Naive thymus-derived CD4-positive, alpha-beta T cell (primary cell): ENCODE measurements at regions of chr10 and their contacts with region 1.

Region 1: GRCh38 chr10:45672181-45673073 is at the start of gene ZFAND4:
- DNase-seq: peak; percentile 88 to 93 (median 91)
- ATAC-seq: peak; percentile 98
- H3K4me3 ChIP-seq: peak within 1 kb of the TSS; percentile 70
- H3K4me3 Mint-ChIP-seq: peak within 1 kb of the TSS; percentile 81 to 99 (median 94)
- H3K27ac ChIP-seq: peak within 1 kb of the TSS; percentile 79
- H3K27ac Mint-ChIP-seq: peak within 1 kb of the TSS; percentile 77 to 97 (median 93)
- H3K4me1 ChIP-seq: peaks cover 7 to 13% of the 10 kb centered on the region in 2 donors
- H3K4me1 Mint-ChIP-seq: peaks cover 23 to 54% (median 46%) of the 10 kb centered on the region in 7 donors
- H3K27me3 ChIP-seq: no peaks in the 10 kb centered on the region
- H3K27me3 Mint-ChIP-seq: peaks cover 0 to under 1% (median 0%) of the 10 kb centered on the region in 5 donors
- total RNA-seq, gene ZFAND4: 21.4 to 33.2 (median 29.5) TPM

Region 2: DNA sequence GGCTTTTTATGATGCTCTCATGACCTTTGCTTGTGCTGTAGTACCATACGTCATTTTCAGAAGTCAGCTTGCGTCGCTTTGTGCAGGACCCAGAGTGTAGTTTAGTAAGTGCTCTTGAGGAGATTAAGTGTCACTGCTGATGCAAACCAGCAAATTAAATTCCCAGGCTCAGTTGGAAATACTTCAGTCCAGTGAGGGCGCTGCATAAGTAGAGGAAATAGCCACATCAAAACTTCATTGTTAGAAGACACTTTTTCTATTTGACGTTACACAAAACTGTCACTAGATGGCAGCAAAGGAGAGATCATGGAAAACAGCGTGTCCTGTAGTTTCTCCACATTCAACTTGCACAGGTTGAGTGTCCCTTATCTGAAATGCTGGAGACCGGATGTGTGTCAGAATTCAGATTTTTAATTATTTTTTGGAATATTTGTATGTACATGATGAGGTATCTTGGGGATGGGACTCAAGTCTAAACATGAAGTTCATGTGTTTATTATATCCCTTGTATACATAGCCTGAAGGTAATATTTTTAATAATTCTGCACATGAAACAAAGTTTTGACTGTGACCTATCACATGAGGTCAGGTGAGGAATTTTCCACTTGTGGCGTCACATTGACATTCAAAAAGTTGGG is 663.8 kb before region 1 on chr10:
- CTCF ChIA-PET with region 1: no interaction called
- POLR2A ChIA-PET with region 1: no interaction called
- intact Hi-C with region 1: loop called in 1 of 2 experiments (anchors 10 kb)
- DNase-seq: peak in 7 of 9 donors; percentile 33 to 68 (median 56)
- ATAC-seq: peak; percentile 91
- H3K4me3 ChIP-seq: no peak overlapping the region
- H3K4me3 Mint-ChIP-seq: no peak overlapping the region
- H3K27ac ChIP-seq: no peak overlapping the region
- H3K27ac Mint-ChIP-seq: no peak overlapping the region
- H3K4me1 ChIP-seq: no peaks in the 10 kb centered on the region
- H3K4me1 Mint-ChIP-seq: peaks cover 0 to 7% (median 3%) of the 10 kb centered on the region in 7 donors
- H3K27me3 ChIP-seq: no peaks in the 10 kb centered on the region
- H3K27me3 Mint-ChIP-seq: peaks cover 0 to 8% (median 0%) of the 10 kb centered on the region in 5 donors

Region 3: DNA sequence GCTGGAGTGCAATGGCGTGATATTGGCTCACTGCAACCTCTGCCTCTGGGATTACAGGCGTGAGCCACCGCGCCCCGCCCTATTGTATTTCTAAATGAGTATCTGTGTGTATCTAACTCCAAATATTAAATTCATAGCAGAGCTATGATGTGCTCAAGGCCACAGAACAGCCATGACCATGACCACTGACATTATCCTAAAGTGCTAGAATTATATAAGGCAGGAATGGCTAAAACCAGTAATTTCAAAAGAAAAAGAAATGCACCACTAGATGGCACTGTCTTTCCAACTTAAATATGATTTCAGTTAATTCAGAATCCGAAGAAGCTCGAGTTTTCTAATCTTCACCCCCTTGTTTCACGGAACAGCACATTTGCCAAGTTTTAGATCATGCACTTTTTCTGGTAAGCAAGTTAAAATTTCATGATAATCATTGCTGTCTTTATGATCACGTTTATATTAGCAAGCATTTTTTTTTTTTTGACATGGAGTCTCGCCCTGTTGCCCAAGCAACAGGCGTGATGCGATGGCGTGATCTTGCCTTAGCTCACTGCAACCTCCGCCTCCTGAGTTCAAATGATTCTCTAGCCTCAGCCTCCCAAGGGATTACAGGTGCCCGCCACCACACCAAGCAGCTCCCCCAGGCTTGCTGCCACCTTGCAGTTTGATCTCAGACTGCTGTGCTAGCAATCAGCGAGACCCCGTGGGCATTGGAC is 422.3 kb before region 1 on chr10:
- CTCF ChIA-PET with region 1: interaction called, 3 read pairs
- POLR2A ChIA-PET with region 1: interaction called, 3 read pairs
- intact Hi-C with region 1: loop called (anchors 5 kb)
- DNase-seq: peak in 7 of 9 donors; percentile 20 to 70 (median 50)
- ATAC-seq: peak; percentile 72
- H3K4me3 ChIP-seq: no peak overlapping the region
- H3K4me3 Mint-ChIP-seq: peak overlapping the region in 6 of 10 donors; percentile 3 to 64 (median 46)
- H3K27ac ChIP-seq: no peak overlapping the region
- H3K27ac Mint-ChIP-seq: no peak overlapping the region
- H3K4me1 ChIP-seq: peaks cover 0 to 4% of the 10 kb centered on the region in 2 donors
- H3K4me1 Mint-ChIP-seq: peaks cover 0 to 20% (median 6%) of the 10 kb centered on the region in 7 donors
- H3K27me3 ChIP-seq: no peaks in the 10 kb centered on the region
- H3K27me3 Mint-ChIP-seq: peaks cover 0 to 19% (median 4%) of the 10 kb centered on the region in 5 donors

Region 4: DNA sequence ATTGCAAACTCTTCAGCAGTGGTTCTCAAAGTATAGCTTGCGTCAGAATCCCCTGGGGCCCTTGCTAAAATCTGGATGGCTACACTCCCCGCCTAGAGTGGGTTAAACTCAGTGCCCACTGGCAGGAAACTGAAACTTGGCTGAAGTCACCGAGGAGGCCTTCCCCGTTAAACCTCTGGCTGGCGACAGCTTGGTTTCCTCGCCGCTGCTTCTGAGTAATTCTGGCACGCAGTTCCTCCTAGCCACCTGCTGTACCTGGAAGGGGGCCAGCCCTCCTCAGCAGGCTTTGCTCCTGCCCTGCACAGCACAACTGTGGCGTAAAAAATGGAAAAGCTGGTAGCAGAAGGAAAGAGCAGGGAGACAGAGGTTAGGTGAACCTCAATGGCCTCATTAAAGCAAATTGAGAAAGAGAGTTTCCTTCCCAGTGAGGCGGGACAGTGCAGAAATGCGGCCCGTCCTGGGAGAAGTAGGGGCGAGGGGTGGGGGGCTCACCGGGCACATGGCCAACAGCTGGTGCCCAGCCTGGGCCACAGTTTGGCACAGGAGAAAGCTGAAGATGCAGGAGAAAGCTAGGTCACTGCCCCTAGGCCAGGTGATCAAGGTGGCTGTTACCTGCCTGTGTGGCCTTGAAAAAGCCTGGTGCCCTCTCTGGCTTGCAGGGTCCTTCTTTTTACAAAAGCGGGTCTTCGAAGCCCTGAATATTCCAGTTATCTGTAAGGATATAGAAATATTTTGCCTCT is 251.8 kb before region 1 on chr10:
- CTCF ChIA-PET with region 1: no interaction called
- POLR2A ChIA-PET with region 1: interaction called, 6 read pairs
- intact Hi-C with region 1: loop called (anchors 1 to 2 kb)
- DNase-seq: peak in 8 of 9 donors; percentile 35 to 52 (median 39)
- ATAC-seq: peak; percentile 47
- H3K4me3 ChIP-seq: peak overlapping the region; percentile 35
- H3K4me3 Mint-ChIP-seq: peak overlapping the region; percentile 89 to 97 (median 94)
- H3K27ac ChIP-seq: peak overlapping the region; percentile 82
- H3K27ac Mint-ChIP-seq: peak overlapping the region; percentile 87 to 99 (median 96)
- H3K4me1 ChIP-seq: peaks cover 32 to 41% of the 10 kb centered on the region in 2 donors
- H3K4me1 Mint-ChIP-seq: peaks cover 39 to 77% (median 50%) of the 10 kb centered on the region in 7 donors
- H3K27me3 ChIP-seq: no peaks in the 10 kb centered on the region
- H3K27me3 Mint-ChIP-seq: no peaks in the 10 kb centered on the region

Region 5: GRCh38 chr10:45470098-45471012 is 202.1 kb before region 1 on chr10:
- CTCF ChIA-PET with region 1: interaction called, 8 read pairs
- POLR2A ChIA-PET with region 1: interaction called, 3 read pairs
- intact Hi-C with region 1: loop called (anchors 1 to 2 kb)
- DNase-seq: peak; percentile 17 to 84 (median 74)
- ATAC-seq: peak; percentile 91
- H3K4me3 ChIP-seq: no peak overlapping the region
- H3K4me3 Mint-ChIP-seq: peak overlapping the region; percentile 48 to 73 (median 62)
- H3K27ac ChIP-seq: peak overlapping the region; percentile 45
- H3K27ac Mint-ChIP-seq: peak overlapping the region; percentile 74 to 93 (median 88)
- H3K4me1 ChIP-seq: peaks cover 12 to 16% of the 10 kb centered on the region in 2 donors
- H3K4me1 Mint-ChIP-seq: peaks cover 18 to 57% (median 43%) of the 10 kb centered on the region in 7 donors
- H3K27me3 ChIP-seq: no peaks in the 10 kb centered on the region
- H3K27me3 Mint-ChIP-seq: no peaks in the 10 kb centered on the region

Region 6: GRCh38 chr10:46022978-46023702 is 350.7 kb after region 1 on chr10:
- CTCF ChIA-PET with region 1: no interaction called
- POLR2A ChIA-PET with region 1: no interaction called
- intact Hi-C with region 1: loop called (anchors 2 to 5 kb)
- DNase-seq: peak; percentile 59 to 85 (median 65)
- ATAC-seq: peak; percentile 96
- H3K4me3 ChIP-seq: peak overlapping the region; percentile 60
- H3K4me3 Mint-ChIP-seq: peak overlapping the region; percentile 78 to 95 (median 90)
- H3K27ac ChIP-seq: peak overlapping the region; percentile 75
- H3K27ac Mint-ChIP-seq: peak overlapping the region; percentile 51 to 95 (median 80)
- H3K4me1 ChIP-seq: peaks cover 38 to 55% of the 10 kb centered on the region in 2 donors
- H3K4me1 Mint-ChIP-seq: peaks cover 64 to 100% (median 94%) of the 10 kb centered on the region in 7 donors
- H3K27me3 ChIP-seq: no peaks in the 10 kb centered on the region
- H3K27me3 Mint-ChIP-seq: no peaks in the 10 kb centered on the region

Region 7: GRCh38 chr10:46092524-46093081 is 420.2 kb after region 1 on chr10:
- CTCF ChIA-PET with region 1: no interaction called
- POLR2A ChIA-PET with region 1: no interaction called
- intact Hi-C with region 1: loop called in 1 of 2 experiments (anchors 5 kb)
- DNase-seq: peak in 7 of 9 donors; percentile 47 to 78 (median 74)
- ATAC-seq: peak; percentile 49
- H3K4me3 ChIP-seq: peak overlapping the region; percentile 72
- H3K4me3 Mint-ChIP-seq: no peak overlapping the region
- H3K27ac ChIP-seq: peak overlapping the region; percentile 80
- H3K27ac Mint-ChIP-seq: no peak overlapping the region
- H3K4me1 ChIP-seq: peaks cover 63 to 73% of the 10 kb centered on the region in 2 donors
- H3K4me1 Mint-ChIP-seq: peaks cover 4 to 44% (median 29%) of the 10 kb centered on the region in 7 donors
- H3K27me3 ChIP-seq: no peaks in the 10 kb centered on the region
- H3K27me3 Mint-ChIP-seq: no peaks in the 10 kb centered on the region